ENCODE measurements at regions of chr12 and their contacts with region 1.

Region 1: DNA sequence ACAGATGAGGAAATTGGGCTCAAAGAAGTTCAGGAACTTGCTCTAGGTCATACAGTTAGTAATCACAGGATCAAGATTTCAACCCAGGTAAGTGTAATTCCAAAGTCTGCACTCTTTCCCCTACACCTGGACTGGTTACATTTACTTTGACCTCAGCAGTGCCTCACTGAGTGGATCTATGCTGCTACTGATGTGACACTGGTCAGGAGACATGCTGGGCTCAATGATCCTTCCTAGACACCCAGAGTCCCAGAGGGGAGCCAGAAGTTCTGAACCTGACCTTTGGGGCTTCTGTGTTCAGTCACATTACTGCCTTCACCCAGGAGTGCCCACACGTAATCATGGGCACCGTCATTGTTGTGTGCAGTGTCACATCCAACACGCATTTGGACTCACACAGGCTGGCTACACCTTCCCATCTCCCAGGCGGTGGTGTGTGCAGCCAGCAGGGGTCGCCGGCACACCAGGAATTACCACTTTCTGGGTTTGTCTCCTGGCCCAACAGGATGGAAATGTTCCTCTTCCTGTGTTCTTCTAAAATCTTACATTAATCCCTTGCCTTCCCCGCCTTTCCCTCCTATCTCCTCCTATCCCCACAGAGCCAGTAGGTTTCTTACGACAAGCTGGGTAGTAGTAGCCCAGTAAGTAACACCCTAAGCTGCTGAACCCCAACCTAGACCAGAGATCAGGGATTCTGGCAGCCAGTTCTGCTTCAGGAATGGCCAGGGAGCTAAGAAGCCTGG is 25.6 kb downstream of the CALCOCO1 start:
- DNase-seq: peak in 3 of 4 donors; percentile 73 to 92 (median 80)
- ATAC-seq: peak; percentile 95
- H3K4me3 ChIP-seq: no peak overlapping the region
- H3K27ac ChIP-seq: no peak overlapping the region
- H3K4me1 ChIP-seq: peaks cover 0 to 4% of the 10 kb centered on the region in 2 donors
- H3K27me3 ChIP-seq: peaks cover 32 to 98% of the 10 kb centered on the region in 2 donors
- CTCF ChIP-seq: peak; percentile 88 to 89

Region 2: GRCh38 chr12:52837413-52837741 is 864.3 kb before region 1 on chr12:
- intact Hi-C with region 1: no loop called
- DNase-seq: no peak
- ATAC-seq: peak; percentile 20
- H3K4me3 ChIP-seq: no peak overlapping the region
- H3K27ac ChIP-seq: no peak overlapping the region
- H3K4me1 ChIP-seq: no peaks in the 10 kb centered on the region
- H3K27me3 ChIP-seq: peaks cover 0 to 87% of the 10 kb centered on the region in 2 donors
- CTCF ChIP-seq: no peak

Region 3: GRCh38 chr12:53743266-53744129 is 41.8 kb after region 1 on chr12:
- intact Hi-C with region 1: loop called in 1 of 2 experiments (anchors 5 kb)
- DNase-seq: peak in 3 of 4 donors; percentile 47 to 74 (median 53)
- ATAC-seq: peak; percentile 78
- H3K4me3 ChIP-seq: no peak overlapping the region
- H3K27ac ChIP-seq: no peak overlapping the region
- H3K4me1 ChIP-seq: peaks cover 7 to 25% of the 10 kb centered on the region in 2 donors
- H3K27me3 ChIP-seq: peaks cover 33 to 91% of the 10 kb centered on the region in 2 donors
- CTCF ChIP-seq: peak; percentile 96 to 98

Region 4: DNA sequence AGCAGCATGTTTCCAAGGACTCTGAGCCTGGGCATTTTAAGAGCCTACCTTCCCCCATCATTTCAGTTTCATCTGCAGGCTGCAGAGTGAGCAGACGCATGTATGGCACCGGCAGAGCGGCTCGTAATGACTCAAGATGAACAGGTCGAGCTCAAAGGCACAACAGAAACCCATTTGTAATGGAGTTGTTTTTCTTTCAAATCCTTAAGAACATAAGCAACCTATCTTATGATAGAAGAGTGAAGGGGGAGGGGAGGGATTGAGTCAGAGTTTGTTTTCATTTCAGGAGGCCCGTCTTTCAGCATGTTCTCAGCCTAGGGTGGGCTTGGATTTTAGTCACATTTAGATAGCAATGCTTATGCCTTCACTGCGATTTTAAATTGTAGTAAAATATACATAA is 105.0 kb after region 1 on chr12:
- intact Hi-C with region 1: no loop called
- DNase-seq: no peak
- ATAC-seq: no peak
- H3K4me3 ChIP-seq: no peak overlapping the region
- H3K27ac ChIP-seq: no peak overlapping the region
- H3K4me1 ChIP-seq: no peaks in the 10 kb centered on the region
- H3K27me3 ChIP-seq: peaks cover 0 to 81% of the 10 kb centered on the region in 2 donors
- CTCF ChIP-seq: no peak

Measured in left lung (tissue), 14 donors.